ENCODE measurements at regions of chr12 and their contacts with region 1.

Region 1: GRCh38 chr12:49347384-49348237 is 923 bp downstream of the DNAJC22 start:
- DNase-seq: peak; percentile 98 to 99
- H3K4me3 ChIP-seq: peak overlapping the region; percentile 43
- H3K4me3 Mint-ChIP-seq: peak overlapping the region; percentile 90
- H3K27ac Mint-ChIP-seq: peak overlapping the region; percentile 98
- H3K4me1 ChIP-seq: peaks cover 16% of the 10 kb centered on the region
- H3K4me1 Mint-ChIP-seq: peaks cover 14% of the 10 kb centered on the region
- H3K27me3 ChIP-seq: no peaks in the 10 kb centered on the region
- H3K27me3 Mint-ChIP-seq: no peaks in the 10 kb centered on the region
- CTCF ChIP-seq: peak; percentile 97 to 98

Region 2: GRCh38 chr12:49264738-49265515 is 82.7 kb before region 1 on chr12 and contains the start of gene TUBA1C:
- CTCF ChIA-PET with region 1: interaction called, 11 read pairs
- POLR2A ChIA-PET with region 1: interaction called, 3 read pairs
- intact Hi-C with region 1: no loop called
- DNase-seq: peak; percentile 97 to 99
- H3K4me3 ChIP-seq: peak within 1 kb of the TSS; percentile 79
- H3K4me3 Mint-ChIP-seq: peak within 1 kb of the TSS; percentile 86
- H3K27ac Mint-ChIP-seq: peak within 1 kb of the TSS; percentile 89
- H3K4me1 ChIP-seq: peaks cover 30% of the 10 kb centered on the region
- H3K4me1 Mint-ChIP-seq: peaks cover 22% of the 10 kb centered on the region
- H3K27me3 ChIP-seq: no peaks in the 10 kb centered on the region
- H3K27me3 Mint-ChIP-seq: no peaks in the 10 kb centered on the region
- CTCF ChIP-seq: no peak
- total RNA-seq, gene TUBA1C: 636 and 638 TPM in 2 replicates

Region 3: DNA sequence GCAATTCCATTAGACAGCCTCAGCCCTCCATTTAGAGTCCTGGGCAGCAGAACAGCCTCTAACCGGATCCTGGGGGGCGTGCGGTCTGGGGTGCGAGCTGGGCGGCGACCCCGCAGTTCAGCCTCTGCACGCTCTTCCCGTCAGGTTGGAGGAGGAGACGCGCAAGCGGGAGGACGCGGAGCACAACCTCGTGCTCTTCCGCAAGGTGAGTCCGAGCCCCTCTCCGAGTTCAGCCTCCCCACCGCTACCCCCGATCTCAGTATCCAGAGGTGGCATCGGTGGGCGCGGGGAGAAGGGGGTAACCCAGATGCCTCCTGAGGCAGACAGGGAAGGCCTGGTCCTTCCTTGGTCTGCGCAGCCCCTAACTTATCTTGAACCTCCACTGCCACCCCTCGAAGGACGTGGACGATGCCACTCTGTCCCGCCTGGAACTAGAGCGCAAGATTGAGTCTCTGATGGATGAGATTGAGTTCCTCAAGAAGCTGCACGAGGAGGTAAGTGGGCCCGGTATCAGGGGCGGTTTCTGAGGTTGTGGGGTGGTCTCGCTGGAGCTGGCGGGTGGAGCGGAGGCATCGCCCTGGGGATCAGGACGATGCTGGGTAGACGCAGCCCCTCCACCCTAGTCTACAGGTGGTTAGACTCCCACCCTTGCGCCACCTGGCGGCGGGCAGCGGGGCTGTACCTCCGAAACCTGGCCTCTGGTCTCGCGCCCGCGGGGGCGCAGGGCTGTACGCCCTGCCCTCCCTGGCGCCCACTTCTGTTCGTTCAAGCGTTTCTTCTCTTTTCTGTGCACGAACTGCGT is 51.4 kb before region 1 on chr12:
- CTCF ChIA-PET with region 1: interaction called, 40 read pairs
- POLR2A ChIA-PET with region 1: no interaction called
- intact Hi-C with region 1: loop called (anchors 2 kb)
- DNase-seq: peak; percentile 74 to 88
- H3K4me3 ChIP-seq: peak overlapping the region; percentile 69
- H3K4me3 Mint-ChIP-seq: peak overlapping the region; percentile 79
- H3K27ac Mint-ChIP-seq: no peak overlapping the region
- H3K4me1 ChIP-seq: 0 out of 2 replicates have a peak, but pooled peaks cover 5% of the 10 kb centered on the region
- H3K4me1 Mint-ChIP-seq: peaks cover 14% of the 10 kb centered on the region
- H3K27me3 ChIP-seq: no peaks in the 10 kb centered on the region
- H3K27me3 Mint-ChIP-seq: no peaks in the 10 kb centered on the region
- CTCF ChIP-seq: peak; percentile 84 to 94

Region 4: GRCh38 chr12:49331380-49332222 is 16.0 kb before region 1 on chr12:
- CTCF ChIA-PET with region 1: interaction called, 153 read pairs
- POLR2A ChIA-PET with region 1: interaction called, 30 read pairs
- intact Hi-C with region 1: loop called (anchors 1 kb)
- DNase-seq: peak; percentile 84 to 86
- H3K4me3 ChIP-seq: no peak overlapping the region
- H3K4me3 Mint-ChIP-seq: peak overlapping the region; percentile 18
- H3K27ac Mint-ChIP-seq: peak overlapping the region; percentile 77
- H3K4me1 ChIP-seq: peaks cover 24% of the 10 kb centered on the region
- H3K4me1 Mint-ChIP-seq: peaks cover 24% of the 10 kb centered on the region
- H3K27me3 ChIP-seq: no peaks in the 10 kb centered on the region
- H3K27me3 Mint-ChIP-seq: no peaks in the 10 kb centered on the region
- CTCF ChIP-seq: peak; percentile 90 to 96

Region 5: DNA sequence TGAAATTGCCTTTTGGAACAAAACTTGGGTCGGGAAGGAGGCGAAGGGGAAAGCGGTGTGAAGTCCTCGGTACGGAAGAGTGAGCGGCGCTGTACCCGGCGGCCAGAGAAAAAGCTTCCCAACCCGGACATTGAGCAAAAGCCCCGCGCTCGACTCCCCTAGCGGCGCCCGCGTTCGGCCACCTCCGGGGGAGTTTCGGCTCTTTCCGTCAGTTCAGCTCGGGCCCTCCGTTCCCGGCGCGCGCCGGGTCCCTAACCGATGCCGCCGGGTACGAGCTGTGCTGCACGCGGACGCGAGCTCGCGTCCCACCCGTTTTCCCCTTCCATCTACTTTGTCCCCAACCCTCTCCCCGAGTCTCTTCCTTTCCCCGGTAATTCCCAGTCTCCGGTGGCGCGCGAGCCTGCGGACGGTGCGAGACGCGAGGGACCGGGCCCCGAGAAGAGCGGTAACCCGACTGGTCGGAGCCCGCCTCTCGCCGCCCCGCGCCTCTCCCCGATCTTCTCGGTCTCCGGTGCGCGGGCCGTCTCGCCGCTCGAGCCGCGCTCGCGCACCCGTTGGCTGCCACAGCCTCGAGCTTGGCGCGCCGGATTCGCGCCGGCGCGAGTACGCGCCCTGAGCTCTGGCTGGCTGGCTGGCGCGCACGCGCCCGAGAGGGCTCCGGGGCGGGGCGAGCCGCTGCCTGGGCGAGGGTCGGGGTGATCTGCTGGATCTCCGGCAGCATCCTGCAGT is 19.2 kb after region 1 on chr12:
- CTCF ChIA-PET with region 1: interaction called, 46 read pairs
- POLR2A ChIA-PET with region 1: interaction called, 20 read pairs
- intact Hi-C with region 1: no loop called
- DNase-seq: peak; percentile 93 to 100
- H3K4me3 ChIP-seq: peak overlapping the region; percentile 88
- H3K4me3 Mint-ChIP-seq: peak overlapping the region; percentile 75
- H3K27ac Mint-ChIP-seq: peak overlapping the region; percentile 38
- H3K4me1 ChIP-seq: peaks cover 17% of the 10 kb centered on the region
- H3K4me1 Mint-ChIP-seq: no peaks in the 10 kb centered on the region
- H3K27me3 ChIP-seq: no peaks in the 10 kb centered on the region
- H3K27me3 Mint-ChIP-seq: no peaks in the 10 kb centered on the region
- CTCF ChIP-seq: peak in 1 of 2 experiments; percentile 30

Region 6: GRCh38 chr12:49515266-49515665 is 167.7 kb after region 1 on chr12:
- CTCF ChIA-PET with region 1: interaction called, 17 read pairs
- POLR2A ChIA-PET with region 1: no interaction called
- intact Hi-C with region 1: no loop called
- DNase-seq: no peak
- H3K4me3 ChIP-seq: no peak overlapping the region
- H3K4me3 Mint-ChIP-seq: no peak overlapping the region
- H3K27ac Mint-ChIP-seq: no peak overlapping the region
- H3K4me1 ChIP-seq: no peaks in the 10 kb centered on the region
- H3K4me1 Mint-ChIP-seq: no peaks in the 10 kb centered on the region
- H3K27me3 ChIP-seq: no peaks in the 10 kb centered on the region
- H3K27me3 Mint-ChIP-seq: no peaks in the 10 kb centered on the region
- CTCF ChIP-seq: no peak

Measured in Caco-2 (cell line).